ENCODE measurements at regions of chr18 and their contacts with region 1.

Region 1: DNA sequence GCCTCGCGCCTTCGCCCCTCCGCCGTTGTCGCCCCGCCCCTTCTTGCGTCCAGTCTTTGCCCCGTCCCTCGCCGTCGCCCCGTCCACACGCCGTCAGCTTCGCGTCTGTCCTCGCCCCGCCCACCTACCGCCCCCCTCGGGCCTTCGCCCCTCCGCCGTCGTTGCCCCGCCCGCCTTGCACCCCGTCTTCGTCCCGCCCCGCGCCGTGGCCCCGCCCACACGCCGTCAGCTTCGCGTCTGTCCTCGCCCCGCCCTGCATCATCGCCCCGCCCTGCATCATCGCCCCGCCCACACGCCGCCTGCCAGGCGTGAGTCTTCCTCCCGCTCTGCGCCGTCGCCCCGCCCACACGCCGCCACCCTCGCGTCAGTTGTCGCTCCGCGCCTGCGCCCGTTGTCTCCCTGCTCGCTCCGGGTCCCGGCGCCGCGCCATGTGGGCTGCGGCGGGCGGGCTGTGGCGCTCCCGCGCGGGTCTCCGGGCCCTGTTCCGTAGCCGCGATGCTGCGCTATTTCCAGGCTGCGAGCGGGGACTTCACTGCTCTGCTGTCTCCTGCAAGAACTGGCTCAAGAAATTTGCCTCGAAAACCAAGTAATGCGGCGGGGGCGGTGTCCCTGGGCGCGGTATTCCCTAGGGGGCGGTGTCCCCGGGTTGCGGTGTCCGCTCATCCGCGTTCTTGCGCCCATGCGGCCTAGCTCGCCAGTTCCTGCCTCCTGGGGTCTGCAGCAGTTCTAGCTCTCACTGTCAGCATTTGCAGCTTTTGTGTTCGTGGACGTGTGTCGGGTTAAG is at the start of gene RBFA:
- DNase-seq: peak; percentile 100
- H3K4me3 ChIP-seq: peak within 1 kb of the TSS; percentile 73 to 85 (median 80)
- H3K27ac ChIP-seq: peak within 1 kb of the TSS; percentile 86 to 92 (median 89)
- H3K4me1 ChIP-seq: peaks cover 8 to 24% (median 20%) of the 10 kb centered on the region in 4 donors
- H3K27me3 ChIP-seq: no peaks in the 10 kb centered on the region
- CTCF ChIP-seq: peak in 5 of 7 experiments; percentile 9 to 56 (median 22)
- EP300 ChIP-seq: no peak
- POLR2A ChIP-seq: no peak
- total RNA-seq, gene RBFA: 12.8 to 58.8 (median 31.8) TPM

Region 2: GRCh38 chr18:79848579-79849327 is 185.5 kb before region 1 on chr18:
- intact Hi-C with region 1: no loop called
- DNase-seq: peak in 1 of 2 donors; percentile 23
- H3K4me3 ChIP-seq: no peak overlapping the region
- H3K27ac ChIP-seq: no peak overlapping the region
- H3K4me1 ChIP-seq: no peaks in the 10 kb centered on the region
- H3K27me3 ChIP-seq: peaks cover 0 to 5% (median 4%) of the 10 kb centered on the region in 3 donors
- CTCF ChIP-seq: no peak
- EP300 ChIP-seq: no peak
- POLR2A ChIP-seq: no peak

Region 3: GRCh38 chr18:79944126-79944741 is 90.0 kb before region 1 on chr18:
- intact Hi-C with region 1: loop called (anchors 10 kb)
- DNase-seq: peak; percentile 57 to 64
- H3K4me3 ChIP-seq: no peak overlapping the region
- H3K27ac ChIP-seq: peak overlapping the region in 1 of 5 donors; percentile 35
- H3K4me1 ChIP-seq: peaks cover 38 to 80% (median 69%) of the 10 kb centered on the region in 4 donors
- H3K27me3 ChIP-seq: no peaks in the 10 kb centered on the region
- CTCF ChIP-seq: no peak
- EP300 ChIP-seq: no peak
- POLR2A ChIP-seq: no peak

Measured in stomach (tissue), 19 donors.